H1 (cell line): ENCODE measurements at regions of chr17 and their contacts with region 1.

Region 1: GRCh38 chr17:17568749-17569195 is 22.7 kb downstream of the PEMT start:
- DNase-seq: peak; percentile 54 to 97
- H3K4me3 ChIP-seq: no peak overlapping the region
- H3K27ac ChIP-seq: no peak overlapping the region
- H3K4me1 ChIP-seq: peaks cover 0 to 13% (median 8%) of the 10 kb centered on the region in 4 experiments; a peak in 5 of 7 replicates
- H3K27me3 ChIP-seq: no peaks in the 10 kb centered on the region
- CTCF ChIP-seq: peak; percentile 91 to 98 (median 96)
- EP300 ChIP-seq: no peak
- POLR2A ChIP-seq: no peak
- RAD21 ChIP-seq: peak; percentile 83 to 85

Region 2: GRCh38 chr17:17496189-17497064 is 72.3 kb before region 1 on chr17 and contains the start of gene RASD1:
- CTCF ChIA-PET with region 1: interaction called, 81 read pairs
- POLR2A ChIA-PET with region 1: interaction called, 25 read pairs
- DNase-seq: peak in 1 of 2 experiments; percentile 93
- H3K4me3 ChIP-seq: peak within 1 kb of the TSS; percentile 43 to 70 (median 59)
- H3K27ac ChIP-seq: no peak within 1 kb of the TSS
- H3K4me1 ChIP-seq: peaks cover 5 to 29% (median 22%) of the 10 kb centered on the region in 4 experiments
- H3K27me3 ChIP-seq: peaks cover 14 to 26% (median 22%) of the 10 kb centered on the region in 4 experiments; a peak in 6 of 7 replicates
- CTCF ChIP-seq: peak; percentile 78 to 97 (median 81)
- EP300 ChIP-seq: peak in 1 of 2 experiments; percentile 70; a peak in 1 of 3 replicates
- POLR2A ChIP-seq: peak in 1 of 2 experiments; percentile 98; a peak in 2 of 3 replicates
- RAD21 ChIP-seq: peak; percentile 71 to 93
- total RNA-seq, gene RASD1: 1.8 and 2.6 TPM in 2 replicates

Region 3: GRCh38 chr17:17511881-17512858 is 56.6 kb before region 1 on chr17:
- CTCF ChIA-PET with region 1: interaction called, 40 read pairs
- POLR2A ChIA-PET with region 1: interaction called, 3 read pairs
- DNase-seq: no peak
- H3K4me3 ChIP-seq: no peak overlapping the region
- H3K27ac ChIP-seq: no peak overlapping the region
- H3K4me1 ChIP-seq: peaks cover 4 to 24% (median 12%) of the 10 kb centered on the region in 4 experiments
- H3K27me3 ChIP-seq: no peaks in the 10 kb centered on the region
- CTCF ChIP-seq: no peak
- EP300 ChIP-seq: no peak
- POLR2A ChIP-seq: no peak
- RAD21 ChIP-seq: no peak

Region 4: GRCh38 chr17:17535957-17536356 is 32.8 kb before region 1 on chr17:
- CTCF ChIA-PET with region 1: interaction called, 33 read pairs
- POLR2A ChIA-PET with region 1: no interaction called
- DNase-seq: no peak
- H3K4me3 ChIP-seq: no peak overlapping the region
- H3K27ac ChIP-seq: no peak overlapping the region
- H3K4me1 ChIP-seq: no peaks in the 10 kb centered on the region; a peak in 1 of 7 replicates
- H3K27me3 ChIP-seq: no peaks in the 10 kb centered on the region
- CTCF ChIP-seq: no peak
- EP300 ChIP-seq: no peak
- POLR2A ChIP-seq: no peak
- RAD21 ChIP-seq: no peak

Region 5: DNA sequence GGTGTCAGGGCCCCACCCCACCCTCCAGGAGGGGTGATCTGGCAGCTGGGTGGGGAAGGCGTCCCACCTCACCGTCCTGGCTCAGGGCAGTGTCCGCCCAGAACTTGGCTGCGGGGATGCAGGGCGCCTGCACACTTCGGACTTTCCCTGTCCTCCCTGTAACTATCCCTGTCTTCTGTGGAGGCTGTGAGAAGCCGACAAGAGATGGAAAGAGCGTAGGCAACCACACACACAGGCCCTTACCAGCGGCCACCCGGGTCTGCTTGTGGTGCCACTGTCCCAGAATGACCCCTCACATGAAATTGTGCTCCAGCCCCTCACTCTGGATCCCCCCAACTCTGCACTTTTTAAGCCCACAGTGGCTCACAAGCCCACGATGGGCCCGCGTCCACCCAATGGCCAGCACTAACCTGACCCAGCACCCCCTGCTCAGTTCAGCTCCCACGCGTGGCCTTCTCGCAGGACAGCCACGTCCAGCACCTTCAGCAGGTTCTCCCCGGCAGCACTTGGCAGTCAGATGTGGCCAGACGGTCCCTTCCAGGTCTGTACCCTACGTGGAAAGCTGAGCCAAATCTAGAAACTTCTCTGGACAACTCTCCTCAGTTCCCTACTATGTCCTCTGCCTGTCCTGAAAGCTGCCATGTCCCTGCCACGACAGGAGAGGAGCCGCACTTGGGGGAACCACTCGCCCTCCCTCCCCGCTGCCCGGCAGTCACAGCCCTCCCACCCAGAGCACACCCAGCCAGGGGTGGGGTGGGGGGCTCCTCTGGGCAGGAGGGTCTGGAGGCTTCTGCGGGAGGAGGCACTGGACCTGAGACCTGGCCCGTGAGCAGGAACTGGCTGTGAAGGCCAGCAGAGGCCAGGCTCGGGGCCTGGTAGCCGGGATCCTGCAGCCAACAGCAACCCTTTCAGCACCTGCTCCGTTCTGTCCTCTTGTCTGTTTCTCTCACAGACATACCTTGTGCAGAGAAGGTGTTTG is 15.3 kb before region 1 on chr17:
- CTCF ChIA-PET with region 1: interaction called, 29 read pairs
- POLR2A ChIA-PET with region 1: no interaction called
- DNase-seq: no peak
- H3K4me3 ChIP-seq: no peak overlapping the region
- H3K27ac ChIP-seq: no peak overlapping the region
- H3K4me1 ChIP-seq: no peaks in the 10 kb centered on the region; a peak in 1 of 7 replicates
- H3K27me3 ChIP-seq: no peaks in the 10 kb centered on the region
- CTCF ChIP-seq: no peak
- EP300 ChIP-seq: no peak
- POLR2A ChIP-seq: no peak
- RAD21 ChIP-seq: no peak

Region 6: GRCh38 chr17:17591355-17592298 is 22.9 kb after region 1 on chr17 and contains the start of gene PEMT:
- CTCF ChIA-PET with region 1: interaction called, 54 read pairs
- POLR2A ChIA-PET with region 1: no interaction called
- DNase-seq: peak; percentile 90 to 93
- H3K4me3 ChIP-seq: peak within 1 kb of the TSS; percentile 69 to 87 (median 86)
- H3K27ac ChIP-seq: peak within 1 kb of the TSS; percentile 60; the same call in 1 of the 2 replicates
- H3K4me1 ChIP-seq: peaks cover 0 to 10% (median 2%) of the 10 kb centered on the region in 4 experiments; a peak in 4 of 7 replicates
- H3K27me3 ChIP-seq: no peaks in the 10 kb centered on the region
- CTCF ChIP-seq: no peak
- EP300 ChIP-seq: peak in 1 of 2 experiments; percentile 9; a peak in 1 of 3 replicates
- POLR2A ChIP-seq: peak; percentile 4 to 78; a peak in 2 of 3 replicates
- RAD21 ChIP-seq: no peak
- total RNA-seq, gene PEMT: 40.1 and 42.0 TPM in 2 replicates

Region 7: DNA sequence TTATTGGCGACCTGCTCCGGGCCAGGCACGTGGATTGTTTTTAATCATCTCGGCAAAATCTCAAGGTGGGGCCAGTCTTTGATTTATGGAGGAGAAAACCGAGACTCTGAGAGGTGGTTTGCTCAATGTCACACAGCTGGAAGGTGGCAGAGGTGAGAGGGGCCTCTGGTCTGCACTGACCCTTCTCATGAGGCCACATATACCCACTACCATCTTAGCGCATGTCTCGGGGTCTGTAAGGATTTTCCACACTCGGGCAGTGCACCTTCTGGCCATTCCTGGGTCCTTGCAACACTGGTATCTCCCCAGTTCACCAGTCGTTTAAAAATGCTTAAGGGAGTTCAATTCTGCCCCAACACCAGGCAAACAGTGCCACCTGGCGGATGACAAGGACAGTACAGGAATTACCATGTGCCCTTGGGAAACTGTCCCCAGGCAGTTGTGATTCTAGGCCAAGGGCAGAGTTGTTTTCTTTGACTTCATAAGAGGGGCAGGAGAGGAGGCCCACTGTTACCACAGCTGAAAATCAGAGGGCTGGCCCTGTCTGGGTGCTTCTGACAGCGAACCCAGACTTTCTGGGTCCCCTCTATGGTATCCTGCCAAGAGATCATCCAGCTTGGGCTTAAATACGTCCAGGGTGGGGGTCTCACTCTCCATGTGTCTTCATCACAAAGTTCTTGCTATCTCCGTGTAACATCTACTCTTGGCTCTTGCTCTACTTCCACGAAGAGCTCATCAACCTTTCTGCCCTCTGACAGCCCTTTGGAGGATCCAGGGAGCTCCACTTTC is 73.0 kb after region 1 on chr17:
- CTCF ChIA-PET with region 1: interaction called, 14 read pairs
- POLR2A ChIA-PET with region 1: no interaction called
- DNase-seq: peak; percentile 65 to 90
- H3K4me3 ChIP-seq: no peak overlapping the region
- H3K27ac ChIP-seq: no peak overlapping the region
- H3K4me1 ChIP-seq: no peaks in the 10 kb centered on the region
- H3K27me3 ChIP-seq: no peaks in the 10 kb centered on the region
- CTCF ChIP-seq: peak; percentile 87 to 96 (median 93)
- EP300 ChIP-seq: no peak
- POLR2A ChIP-seq: no peak
- RAD21 ChIP-seq: peak; percentile 99